Activated CD4-positive, alpha-beta memory T cell treated with anti-CD3 and anti-CD28 coated beads, Interleukin-2, amount 10 ng/mL, durations not matched to agents 7 days and 5 days (primary cell): ENCODE measurements at regions of chr17 and their contacts with region 1.

Region 1: GRCh38 chr17:36601303-36602029 is at the start of gene MRM1:
- DNase-seq: peak; percentile 91
- H3K4me3 Mint-ChIP-seq: peak within 1 kb of the TSS; percentile 83
- H3K27ac Mint-ChIP-seq: peak within 1 kb of the TSS; percentile 80
- H3K4me1 Mint-ChIP-seq: peaks cover 39% of the 10 kb centered on the region
- H3K27me3 Mint-ChIP-seq: no peaks in the 10 kb centered on the region
- total RNA-seq, gene MRM1: 7.3 to 8.4 TPM

Region 2: GRCh38 chr17:36545465-36546417 is 55.7 kb before region 1 on chr17:
- CTCF ChIA-PET with region 1: interaction called, 8 read pairs
- POLR2A ChIA-PET with region 1: interaction called, 40 read pairs
- DNase-seq: peak; percentile 97
- H3K4me3 Mint-ChIP-seq: peak overlapping the region; percentile 96
- H3K27ac Mint-ChIP-seq: peak overlapping the region; percentile 96
- H3K4me1 Mint-ChIP-seq: peaks cover 51% of the 10 kb centered on the region
- H3K27me3 Mint-ChIP-seq: no peaks in the 10 kb centered on the region

Region 3: DNA sequence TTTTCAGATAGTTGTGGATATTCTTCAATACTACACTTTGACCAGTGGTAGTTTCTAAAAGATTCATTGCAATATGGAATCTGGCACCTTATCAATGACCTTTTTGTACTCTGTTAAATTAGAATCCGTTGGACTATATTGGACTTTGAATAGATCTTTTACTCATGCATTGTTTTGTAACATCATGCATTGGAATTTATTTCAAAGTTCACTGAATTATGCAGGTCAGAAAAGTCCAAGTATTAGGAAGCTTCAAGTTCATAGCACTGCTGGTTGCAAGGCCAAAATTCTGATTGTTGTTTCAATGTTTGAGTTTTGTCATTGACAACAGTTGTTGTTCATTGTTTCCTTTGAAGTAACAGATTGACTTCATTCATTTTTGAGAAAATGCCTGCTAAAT is 17.7 kb before region 1 on chr17:
- CTCF ChIA-PET with region 1: interaction called, 16 read pairs
- POLR2A ChIA-PET with region 1: interaction called, 7 read pairs
- DNase-seq: no peak
- H3K4me3 Mint-ChIP-seq: no peak overlapping the region
- H3K27ac Mint-ChIP-seq: no peak overlapping the region
- H3K4me1 Mint-ChIP-seq: peaks cover 6% of the 10 kb centered on the region
- H3K27me3 Mint-ChIP-seq: no peaks in the 10 kb centered on the region

Region 4: GRCh38 chr17:36755586-36755985 is 154.1 kb after region 1 on chr17:
- CTCF ChIA-PET with region 1: interaction called, 19 read pairs
- POLR2A ChIA-PET with region 1: no interaction called
- DNase-seq: peak; percentile 50
- H3K4me3 Mint-ChIP-seq: no peak overlapping the region
- H3K27ac Mint-ChIP-seq: no peak overlapping the region
- H3K4me1 Mint-ChIP-seq: no peaks in the 10 kb centered on the region
- H3K27me3 Mint-ChIP-seq: peaks cover 2% of the 10 kb centered on the region

Region 5: GRCh38 chr17:37239690-37240334 is 638.3 kb after region 1 on chr17:
- CTCF ChIA-PET with region 1: interaction called, 20 read pairs
- POLR2A ChIA-PET with region 1: interaction called, 3 read pairs
- DNase-seq: no peak
- H3K4me3 Mint-ChIP-seq: no peak overlapping the region
- H3K27ac Mint-ChIP-seq: no peak overlapping the region
- H3K4me1 Mint-ChIP-seq: no peaks in the 10 kb centered on the region
- H3K27me3 Mint-ChIP-seq: no peaks in the 10 kb centered on the region